A673 (cell line): ENCODE measurements at regions of chr1 and their contacts with region 1.

Region 1: GRCh38 chr1:109548321-109549267 is at the start of gene GNAI3:
- DNase-seq: peak; percentile 98
- H3K4me3 ChIP-seq: peak within 1 kb of the TSS; percentile 95
- H3K27ac ChIP-seq: peak within 1 kb of the TSS; percentile 94
- H3K4me1 ChIP-seq: peaks cover 29% of the 10 kb centered on the region
- H3K27me3 ChIP-seq: no peaks in the 10 kb centered on the region
- CTCF ChIP-seq: no peak
- total RNA-seq, gene GNAI3: 11.1 and 12.8 TPM in 2 replicates

Region 2: DNA sequence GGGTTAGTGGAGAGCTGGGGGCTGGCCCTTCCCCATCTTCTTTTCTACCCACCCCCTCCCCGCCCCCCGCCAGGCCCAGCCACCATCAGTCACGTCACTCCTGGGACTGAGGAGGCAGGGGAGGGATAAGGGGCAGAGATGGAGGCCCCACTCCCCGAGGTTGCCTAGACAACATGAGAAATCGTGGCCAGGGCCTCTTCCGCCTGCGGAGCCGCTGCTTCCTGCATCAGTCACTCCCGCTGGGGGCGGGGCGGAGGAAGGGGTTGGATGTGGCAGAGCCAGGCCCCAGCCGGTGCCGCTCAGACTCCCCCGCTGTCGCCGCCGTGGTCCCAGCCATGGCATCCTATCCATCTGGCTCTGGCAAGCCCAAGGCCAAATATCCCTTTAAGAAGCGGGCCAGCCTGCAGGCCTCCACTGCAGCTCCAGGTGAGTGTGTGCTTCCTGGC is 72.3 kb after region 1 on chr1:
- CTCF ChIA-PET with region 1: interaction called, 3 read pairs
- POLR2A ChIA-PET with region 1: no interaction called
- intact Hi-C with region 1: loop called (anchors 5 kb)
- DNase-seq: peak; percentile 98
- H3K4me3 ChIP-seq: peak overlapping the region; percentile 88
- H3K27ac ChIP-seq: peak overlapping the region; percentile 92
- H3K4me1 ChIP-seq: peaks cover 49% of the 10 kb centered on the region
- H3K27me3 ChIP-seq: no peaks in the 10 kb centered on the region
- CTCF ChIP-seq: no peak

Region 3: DNA sequence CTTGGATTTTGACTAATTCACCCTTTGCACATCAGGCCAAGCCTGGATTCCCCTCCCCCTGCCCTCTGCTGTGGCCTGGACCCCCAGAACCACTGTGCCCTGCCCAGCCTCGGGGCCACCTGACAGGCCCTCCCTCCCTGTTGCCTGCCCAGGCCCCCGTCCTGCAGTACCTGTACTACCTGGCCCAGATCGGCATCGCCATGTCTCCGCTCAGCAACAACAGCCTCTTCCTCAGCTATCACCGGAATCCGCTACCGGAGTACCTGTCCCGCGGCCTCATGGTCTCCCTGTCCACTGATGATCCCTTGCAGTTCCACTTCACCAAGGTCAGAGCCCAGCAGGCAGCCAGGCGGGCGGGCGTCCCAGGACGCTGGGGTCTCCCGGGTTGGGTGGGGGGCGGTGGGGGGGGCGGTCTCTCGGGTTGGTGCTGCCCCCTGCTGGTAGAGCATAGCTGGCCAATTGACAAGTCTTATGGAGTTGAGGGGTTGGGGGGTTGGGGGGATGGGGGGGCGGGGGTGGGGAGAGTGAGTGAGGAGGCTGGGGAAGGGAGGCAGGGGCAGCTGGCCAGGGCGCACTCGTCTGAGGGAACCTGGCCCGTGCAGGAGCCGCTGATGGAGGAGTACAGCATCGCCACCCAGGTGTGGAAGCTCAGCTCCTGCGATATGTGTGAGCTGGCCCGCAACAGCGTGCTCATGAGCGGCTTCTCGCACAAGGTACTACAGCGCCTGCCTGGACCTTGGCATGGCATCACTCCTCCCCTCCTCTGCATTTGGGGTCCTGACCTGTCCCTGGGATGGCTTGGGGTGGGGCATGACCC is 81.7 kb after region 1 on chr1:
- CTCF ChIA-PET with region 1: interaction called, 33 read pairs
- POLR2A ChIA-PET with region 1: no interaction called
- intact Hi-C with region 1: no loop called
- DNase-seq: no peak
- H3K4me3 ChIP-seq: no peak overlapping the region
- H3K27ac ChIP-seq: no peak overlapping the region
- H3K4me1 ChIP-seq: peaks cover 25% of the 10 kb centered on the region
- H3K27me3 ChIP-seq: no peaks in the 10 kb centered on the region
- CTCF ChIP-seq: 0 out of 2 replicates have a peak, but pooled peaks have one; percentile 15

Region 4: DNA sequence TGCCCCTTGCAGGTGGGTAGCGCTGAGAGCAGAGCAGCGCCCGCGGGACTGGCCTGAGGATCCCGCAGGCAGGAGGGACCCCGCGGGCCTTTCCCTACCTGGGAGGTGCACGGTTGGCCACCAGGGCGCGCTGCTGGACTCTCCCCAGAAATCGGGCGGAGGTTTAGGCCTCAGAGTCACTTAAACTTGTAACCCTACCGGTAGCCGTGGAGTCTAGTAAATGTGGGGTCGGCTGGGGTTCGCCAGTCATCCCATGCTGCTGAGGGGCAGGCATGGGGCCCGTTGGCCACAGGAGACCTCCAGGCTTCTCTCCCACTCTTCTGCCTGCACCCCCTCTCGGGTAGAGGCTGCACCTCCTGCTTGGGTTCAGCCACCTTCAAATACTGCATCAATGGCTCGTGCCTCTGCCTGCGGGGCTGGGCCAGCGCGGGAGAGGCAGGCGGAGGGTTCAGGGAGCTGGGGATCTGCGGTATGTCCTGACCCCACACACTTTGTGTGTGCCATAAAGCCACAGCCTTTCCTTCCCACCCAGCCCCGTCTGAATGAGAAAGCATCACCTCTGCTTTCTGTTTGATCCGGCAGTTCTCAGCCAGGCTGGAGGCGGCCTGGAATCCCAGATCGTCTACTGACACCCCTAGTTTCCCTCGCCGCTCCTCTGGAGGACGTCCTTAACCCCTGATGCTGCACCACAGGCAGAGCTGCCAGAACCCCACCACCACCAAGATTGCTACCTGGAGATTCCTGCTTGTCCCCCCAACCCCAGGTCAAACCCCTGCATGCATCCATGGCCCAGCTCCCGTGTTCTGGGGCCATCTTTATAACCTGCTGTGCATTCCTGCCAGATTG is 95.0 kb after region 1 on chr1:
- CTCF ChIA-PET with region 1: interaction called, 27 read pairs
- POLR2A ChIA-PET with region 1: no interaction called
- intact Hi-C with region 1: loop called (anchors 5 kb)
- DNase-seq: peak; percentile 85
- H3K4me3 ChIP-seq: no peak overlapping the region
- H3K27ac ChIP-seq: peak overlapping the region; percentile 40
- H3K4me1 ChIP-seq: peaks cover 14% of the 10 kb centered on the region
- H3K27me3 ChIP-seq: no peaks in the 10 kb centered on the region
- CTCF ChIP-seq: peak; percentile 94

Region 5: GRCh38 chr1:109687616-109688499 is 139.3 kb after region 1 on chr1 and contains the start of gene GSTM1:
- CTCF ChIA-PET with region 1: interaction called, 12 read pairs
- POLR2A ChIA-PET with region 1: no interaction called
- intact Hi-C with region 1: no loop called
- DNase-seq: peak; percentile 91
- H3K4me3 ChIP-seq: peak within 1 kb of the TSS; percentile 64
- H3K27ac ChIP-seq: peak within 1 kb of the TSS; percentile 82
- H3K4me1 ChIP-seq: no peaks in the 10 kb centered on the region
- H3K27me3 ChIP-seq: no peaks in the 10 kb centered on the region
- CTCF ChIP-seq: peak; percentile 55
- total RNA-seq, gene GSTM1: 166 TPM in 2 replicates

Region 6: GRCh38 chr1:109773146-109773899 is 224.7 kb after region 1 on chr1:
- CTCF ChIA-PET with region 1: interaction called, 23 read pairs
- POLR2A ChIA-PET with region 1: no interaction called
- intact Hi-C with region 1: loop called (anchors 1 kb)
- DNase-seq: peak; percentile 95
- H3K4me3 ChIP-seq: no peak overlapping the region
- H3K27ac ChIP-seq: no peak overlapping the region
- H3K4me1 ChIP-seq: peaks cover 7% of the 10 kb centered on the region
- H3K27me3 ChIP-seq: no peaks in the 10 kb centered on the region
- CTCF ChIP-seq: peak; percentile 97

Region 7: GRCh38 chr1:109969146-109969829 is 420.7 kb after region 1 on chr1:
- CTCF ChIA-PET with region 1: no interaction called
- POLR2A ChIA-PET with region 1: no interaction called
- intact Hi-C with region 1: no loop called
- DNase-seq: no peak
- H3K4me3 ChIP-seq: no peak overlapping the region
- H3K27ac ChIP-seq: no peak overlapping the region
- H3K4me1 ChIP-seq: no peaks in the 10 kb centered on the region
- H3K27me3 ChIP-seq: no peaks in the 10 kb centered on the region
- CTCF ChIP-seq: no peak